Ovary (tissue), 10 donors: ENCODE measurements at regions of chr3 and their contacts with region 1.

Region 1: GRCh38 chr3:130892759-130893375 is 1.0 kb upstream of the ATP2C1 start:
- DNase-seq: peak in 4 of 5 donors; percentile 41 to 75 (median 62)
- H3K4me3 ChIP-seq: peak overlapping the region; percentile 82
- H3K27ac ChIP-seq: peak overlapping the region; percentile 86 to 88
- H3K4me1 ChIP-seq: peaks cover 1% of the 10 kb centered on the region
- H3K27me3 ChIP-seq: no peaks in the 10 kb centered on the region
- CTCF ChIP-seq: peak; percentile 44 to 80 (median 79)
- EP300 ChIP-seq: no peak
- POLR2A ChIP-seq: no peak

Region 2: DNA sequence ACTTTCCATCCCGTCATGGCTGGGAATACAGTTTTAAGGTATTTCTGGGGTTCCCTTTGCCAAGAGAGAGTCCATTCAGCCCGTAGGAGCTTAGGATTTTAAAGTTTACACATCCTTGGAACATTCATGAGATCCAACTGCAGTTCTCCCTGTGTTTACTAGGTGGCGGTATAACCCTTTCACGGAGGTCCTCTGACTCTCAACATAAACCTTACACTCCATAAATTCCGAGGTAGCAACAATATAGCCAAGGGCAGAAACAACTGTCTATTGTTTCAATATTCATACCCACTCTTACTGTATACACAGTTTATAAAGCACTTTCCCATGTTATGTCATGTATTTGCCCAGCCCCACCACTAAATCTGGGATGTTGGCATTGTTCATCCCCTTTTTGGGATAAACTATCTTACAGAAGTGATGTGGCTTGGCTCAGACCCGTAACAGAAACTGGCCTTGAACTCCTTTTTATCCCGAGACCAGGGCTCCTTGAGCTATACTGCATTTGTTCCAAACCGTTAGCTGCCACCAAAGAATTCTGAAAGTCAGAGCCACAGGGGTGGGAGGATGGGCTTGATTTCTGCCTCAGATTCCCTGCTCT is 616.6 kb before region 1 on chr3:
- intact Hi-C with region 1: loop called in 1 of 4 experiments (anchors 10 kb)
- DNase-seq: peak in 1 of 5 donors; percentile 15
- H3K4me3 ChIP-seq: no peak overlapping the region
- H3K27ac ChIP-seq: peak overlapping the region in 1 of 2 donors; percentile 18
- H3K4me1 ChIP-seq: no peaks in the 10 kb centered on the region
- H3K27me3 ChIP-seq: no peaks in the 10 kb centered on the region
- CTCF ChIP-seq: peak; percentile 68 to 74 (median 74)
- EP300 ChIP-seq: no peak
- POLR2A ChIP-seq: no peak

Region 3: DNA sequence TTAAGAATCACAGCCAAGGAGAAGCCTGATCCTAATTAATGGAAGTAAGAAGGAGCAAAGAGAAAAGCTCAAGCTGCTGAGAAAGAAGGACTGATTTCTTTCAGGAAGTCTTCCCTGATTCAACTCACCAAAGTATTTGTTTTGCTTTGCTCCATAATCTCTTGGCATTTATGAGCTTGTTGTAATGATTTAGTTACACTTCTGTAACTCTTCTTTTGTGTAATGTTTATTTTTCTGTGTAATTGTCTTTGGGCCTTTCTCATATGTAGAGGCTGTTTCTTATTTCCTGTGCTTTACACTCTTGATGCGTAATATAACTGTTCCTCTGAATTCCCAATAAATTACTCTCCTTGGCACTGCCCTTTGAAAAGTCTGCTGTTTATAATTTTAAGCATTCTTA is 467.4 kb before region 1 on chr3:
- intact Hi-C with region 1: loop called in 1 of 4 experiments (anchors 5 kb)
- DNase-seq: no peak
- H3K4me3 ChIP-seq: no peak overlapping the region
- H3K27ac ChIP-seq: no peak overlapping the region
- H3K4me1 ChIP-seq: no peaks in the 10 kb centered on the region
- H3K27me3 ChIP-seq: no peaks in the 10 kb centered on the region
- CTCF ChIP-seq: no peak
- EP300 ChIP-seq: no peak
- POLR2A ChIP-seq: no peak

Region 4: DNA sequence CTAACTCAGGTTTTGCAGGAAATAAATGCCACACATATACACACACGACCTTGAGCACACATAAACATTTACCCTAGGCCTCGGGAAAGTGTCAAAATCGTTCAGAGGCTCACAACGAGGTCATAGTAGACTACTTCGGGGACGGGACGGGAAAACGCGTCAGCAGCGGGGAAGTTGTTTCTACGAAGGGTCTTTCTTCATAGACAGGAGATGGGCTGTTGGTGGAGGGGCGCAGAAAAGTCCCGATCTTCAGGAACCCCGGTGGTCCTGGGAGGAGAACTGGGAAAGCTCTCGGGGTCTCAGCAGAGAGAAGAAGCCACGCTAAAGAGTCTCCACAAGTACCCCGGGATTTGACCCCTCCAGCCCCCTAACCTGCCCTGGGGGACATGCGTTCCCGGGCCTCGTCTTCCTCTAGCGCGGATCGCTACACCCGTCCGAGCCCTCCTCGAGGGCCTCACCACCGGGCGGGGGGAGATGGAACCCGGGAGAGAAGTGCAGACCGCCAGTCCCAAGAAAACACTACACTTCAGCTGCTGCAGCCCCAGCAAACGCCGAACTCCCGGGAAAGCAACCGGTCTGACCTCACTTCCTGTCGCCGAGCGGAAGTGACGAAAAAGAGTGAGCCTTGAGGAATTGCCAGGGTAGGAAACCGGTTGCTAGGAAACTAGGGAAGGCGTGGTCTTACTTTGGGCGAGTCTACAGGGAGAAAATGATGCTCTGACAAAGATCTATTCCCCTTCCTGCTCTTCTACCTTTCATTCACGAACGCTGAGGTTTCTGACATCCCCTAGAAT is 146.4 kb before region 1 on chr3 and contains the start of gene PIK3R4:
- intact Hi-C with region 1: loop called in 2 of 4 experiments (anchors 5 to 10 kb)
- DNase-seq: peak; percentile 91 to 95 (median 92)
- H3K4me3 ChIP-seq: peak within 1 kb of the TSS; percentile 94
- H3K27ac ChIP-seq: peak within 1 kb of the TSS; percentile 61 to 76
- H3K4me1 ChIP-seq: peaks cover 13% of the 10 kb centered on the region
- H3K27me3 ChIP-seq: no peaks in the 10 kb centered on the region
- CTCF ChIP-seq: no peak
- EP300 ChIP-seq: peak; percentile 44
- POLR2A ChIP-seq: peak; percentile 69
- total RNA-seq, gene PIK3R4: 22.1 to 43.8 (median 29.7) TPM

Region 5: GRCh38 chr3:130759699-130760338 is 133.0 kb before region 1 on chr3:
- intact Hi-C with region 1: loop called in 1 of 4 experiments (anchors 10 kb)
- DNase-seq: peak in 2 of 5 donors; percentile 14 to 32
- H3K4me3 ChIP-seq: no peak overlapping the region
- H3K27ac ChIP-seq: no peak overlapping the region
- H3K4me1 ChIP-seq: no peaks in the 10 kb centered on the region
- H3K27me3 ChIP-seq: no peaks in the 10 kb centered on the region
- CTCF ChIP-seq: peak; percentile 33 to 57 (median 35)
- EP300 ChIP-seq: no peak
- POLR2A ChIP-seq: no peak

Region 6: GRCh38 chr3:131020122-131020693 is 127.3 kb after region 1 on chr3:
- intact Hi-C with region 1: no loop called
- DNase-seq: no peak
- H3K4me3 ChIP-seq: no peak overlapping the region
- H3K27ac ChIP-seq: no peak overlapping the region
- H3K4me1 ChIP-seq: peaks cover 5% of the 10 kb centered on the region
- H3K27me3 ChIP-seq: no peaks in the 10 kb centered on the region
- CTCF ChIP-seq: no peak
- EP300 ChIP-seq: no peak
- POLR2A ChIP-seq: no peak

Region 7: GRCh38 chr3:131142580-131142979 is 249.7 kb after region 1 on chr3:
- intact Hi-C with region 1: no loop called
- DNase-seq: no peak
- H3K4me3 ChIP-seq: no peak overlapping the region
- H3K27ac ChIP-seq: no peak overlapping the region
- H3K4me1 ChIP-seq: no peaks in the 10 kb centered on the region
- H3K27me3 ChIP-seq: no peaks in the 10 kb centered on the region
- CTCF ChIP-seq: no peak
- EP300 ChIP-seq: no peak
- POLR2A ChIP-seq: no peak